ENCODE measurements at regions of chr2 and their contacts with region 1.

Region 1: DNA sequence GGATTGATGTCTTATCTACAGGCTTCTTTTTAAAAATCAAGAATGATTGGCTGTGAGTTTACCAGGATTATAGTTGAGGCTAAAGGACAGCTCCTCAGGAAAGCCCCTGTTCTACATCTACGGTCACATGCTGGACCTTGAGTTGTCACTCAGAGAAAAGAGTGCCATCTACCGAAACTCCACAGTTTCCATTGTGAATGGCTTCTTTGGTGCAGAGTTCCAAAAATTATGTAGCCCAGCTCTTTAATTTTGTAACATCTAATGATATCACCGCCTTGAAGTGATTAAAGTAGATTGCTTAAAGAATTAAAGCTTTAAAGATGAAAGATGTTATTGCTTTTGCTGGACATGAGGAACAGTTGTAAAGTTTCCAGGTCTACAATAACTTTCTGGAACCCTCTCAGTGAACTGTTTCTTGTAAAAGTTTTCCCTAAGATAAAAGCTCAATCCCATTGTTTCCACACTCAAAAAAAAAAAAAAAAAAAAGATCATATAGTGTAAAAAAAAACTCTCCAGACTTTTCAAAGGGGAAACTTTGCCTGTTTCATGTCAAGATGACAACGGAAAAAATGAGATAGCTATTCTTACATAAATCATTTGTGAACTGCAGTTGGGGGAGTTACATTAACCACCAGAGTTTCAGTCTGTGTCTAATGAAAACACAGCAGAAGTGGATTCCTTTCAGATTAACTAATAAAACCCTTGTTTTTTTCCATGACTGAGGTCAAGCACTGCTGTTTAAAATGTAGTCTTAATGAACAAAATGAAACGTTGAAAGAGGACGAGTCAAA is 4.3 kb downstream of the COL3A1 start:
- DNase-seq: no peak
- H3K4me3 Mint-ChIP-seq: no peak overlapping the region
- H3K27ac Mint-ChIP-seq: no peak overlapping the region
- H3K4me1 Mint-ChIP-seq: no peaks in the 10 kb centered on the region
- H3K27me3 Mint-ChIP-seq: no peaks in the 10 kb centered on the region
- CTCF ChIP-seq: no peak

Region 2: GRCh38 chr2:188966079-188966571 is 12.4 kb before region 1 on chr2:
- CTCF ChIA-PET with region 1: interaction called, 11 read pairs
- POLR2A ChIA-PET with region 1: no interaction called
- intact Hi-C with region 1: no loop called
- DNase-seq: no peak
- H3K4me3 Mint-ChIP-seq: no peak overlapping the region
- H3K27ac Mint-ChIP-seq: no peak overlapping the region
- H3K4me1 Mint-ChIP-seq: no peaks in the 10 kb centered on the region
- H3K27me3 Mint-ChIP-seq: no peaks in the 10 kb centered on the region
- CTCF ChIP-seq: no peak

Measured in MCF 10A (cell line).